A549 (cell line): ENCODE measurements at regions of chr15 and their contacts with region 1.

Region 1: DNA sequence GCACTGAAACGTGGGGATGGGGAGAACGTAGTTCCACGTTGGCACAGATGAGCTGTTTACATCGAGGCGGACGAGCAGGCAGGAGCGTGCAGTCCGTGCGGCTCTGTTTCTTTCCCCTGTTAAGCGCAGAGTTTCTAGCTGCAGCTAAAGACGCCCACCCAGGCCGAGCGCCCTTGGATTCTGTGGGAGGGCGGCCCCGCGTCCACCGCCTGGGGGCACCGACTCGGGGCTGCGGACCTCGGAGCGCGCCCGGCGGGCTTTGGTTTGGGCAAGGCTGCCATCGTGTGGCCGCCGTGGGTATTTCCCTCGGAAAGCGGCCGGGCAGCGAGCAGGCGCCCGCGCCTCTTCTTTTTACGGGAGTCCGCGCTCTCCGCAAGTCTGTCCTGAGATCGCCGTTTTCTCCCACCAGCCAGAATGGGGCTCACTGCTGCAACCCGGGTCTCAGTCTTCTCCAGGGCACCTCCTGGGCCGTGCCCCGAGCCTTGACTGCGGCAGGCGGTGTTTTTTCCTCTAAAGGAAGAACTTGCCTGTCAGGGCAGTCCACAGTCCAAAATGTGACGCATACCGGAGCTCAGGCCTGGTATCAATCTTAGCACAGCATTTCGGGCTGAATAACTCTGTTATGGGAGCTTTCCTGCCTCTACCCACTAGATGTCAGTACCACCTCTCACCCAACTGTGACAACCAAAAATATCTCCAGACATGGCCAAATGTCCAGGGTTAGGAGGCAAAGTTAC is 219.9 kb upstream of the IGF1R start:
- DNase-seq: peak; percentile 76 to 85
- ATAC-seq: peak; percentile 79 to 93
- H3K4me3 ChIP-seq: peak overlapping the region; percentile 39
- H3K27ac ChIP-seq: peak overlapping the region; percentile 31 to 56; a peak in 4 of 6 replicates
- H3K4me1 ChIP-seq: no peaks in the 10 kb centered on the region
- CTCF ChIP-seq: peak; percentile 94
- EP300 ChIP-seq: no peak
- POLR2A ChIP-seq: no peak
- RAD21 ChIP-seq: peak; percentile 69 to 83

Region 2: GRCh38 chr15:98304371-98304770 is 124.0 kb before region 1 on chr15:
- CTCF ChIA-PET with region 1: interaction called, 16 read pairs
- POLR2A ChIA-PET with region 1: no interaction called
- DNase-seq: no peak
- ATAC-seq: no peak
- H3K4me3 ChIP-seq: no peak overlapping the region
- H3K27ac ChIP-seq: no peak overlapping the region
- H3K4me1 ChIP-seq: no peaks in the 10 kb centered on the region
- CTCF ChIP-seq: no peak
- EP300 ChIP-seq: no peak
- POLR2A ChIP-seq: no peak
- RAD21 ChIP-seq: no peak

Region 3: DNA sequence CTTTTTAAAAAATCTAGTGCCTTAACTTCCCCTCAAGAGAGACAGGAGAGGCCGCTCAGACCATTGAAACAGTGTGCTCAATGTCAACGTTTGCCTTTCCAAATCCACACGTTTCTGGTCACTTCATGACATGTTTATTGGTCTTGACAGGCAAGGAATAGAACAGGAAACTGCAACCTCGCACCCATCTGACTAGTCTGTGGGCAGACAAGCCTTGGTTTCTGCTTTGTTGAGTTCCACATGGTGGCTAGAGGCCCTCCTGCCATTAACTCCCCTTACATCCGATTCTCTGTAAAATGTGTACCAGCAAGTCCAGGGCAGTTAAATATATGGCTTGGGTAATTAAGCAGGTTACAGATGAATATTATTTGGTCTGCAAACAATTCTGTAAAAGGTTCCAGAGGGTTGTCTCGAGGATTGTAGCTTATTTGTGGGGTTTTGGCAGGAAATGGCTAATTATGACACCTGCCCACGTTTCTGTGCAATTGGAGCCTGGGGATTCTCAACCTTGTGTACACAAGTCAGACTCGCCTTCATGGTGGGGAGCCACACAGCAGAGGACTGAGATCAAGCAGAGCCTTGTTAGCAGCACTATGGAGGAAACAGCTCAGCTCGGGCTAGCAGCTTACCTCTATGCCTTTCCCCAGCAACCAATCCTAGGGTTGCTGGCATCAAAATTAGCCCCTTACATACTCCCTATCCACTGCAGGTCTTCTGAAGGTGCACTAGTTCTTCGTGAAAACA is 97.6 kb before region 1 on chr15:
- CTCF ChIA-PET with region 1: interaction called, 11 read pairs
- POLR2A ChIA-PET with region 1: no interaction called
- DNase-seq: no peak
- ATAC-seq: no peak
- H3K4me3 ChIP-seq: no peak overlapping the region
- H3K27ac ChIP-seq: no peak overlapping the region
- H3K4me1 ChIP-seq: no peaks in the 10 kb centered on the region
- CTCF ChIP-seq: no peak
- EP300 ChIP-seq: no peak
- POLR2A ChIP-seq: no peak
- RAD21 ChIP-seq: no peak

Region 4: DNA sequence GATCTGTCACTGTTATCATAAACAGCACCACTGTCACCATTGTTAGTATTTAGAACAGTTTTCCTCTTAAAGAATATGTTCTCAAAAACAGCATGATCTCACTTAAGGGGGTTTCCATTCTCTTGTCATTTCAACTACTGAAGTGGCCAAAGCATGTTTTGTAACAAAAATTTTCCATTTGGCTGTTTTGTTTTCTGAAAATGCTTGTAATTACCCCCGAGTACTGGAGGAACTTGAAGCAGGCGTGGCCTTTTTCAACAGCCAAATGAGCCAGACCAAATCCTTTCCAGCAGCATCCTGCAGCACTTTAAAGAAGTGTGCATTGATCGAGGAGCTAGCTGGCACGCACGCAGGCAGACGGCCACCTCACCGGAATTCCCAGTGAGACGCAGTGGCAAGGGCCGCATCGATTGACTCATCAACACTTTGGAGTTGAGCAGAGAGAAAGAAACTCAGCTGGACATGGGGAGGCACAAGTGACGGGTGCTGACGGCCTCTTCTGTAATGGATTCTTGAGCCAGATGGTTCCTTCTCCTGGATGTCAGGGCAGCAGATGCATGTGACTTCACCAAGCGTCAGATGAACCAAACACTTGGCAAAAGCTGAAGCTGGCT is 14.4 kb before region 1 on chr15:
- CTCF ChIA-PET with region 1: interaction called, 82 read pairs
- POLR2A ChIA-PET with region 1: no interaction called
- DNase-seq: no peak
- ATAC-seq: no peak
- H3K4me3 ChIP-seq: no peak overlapping the region
- H3K27ac ChIP-seq: no peak overlapping the region
- H3K4me1 ChIP-seq: peaks cover 6% of the 10 kb centered on the region; the same call in 1 of the 3 replicates
- CTCF ChIP-seq: no peak
- EP300 ChIP-seq: no peak
- POLR2A ChIP-seq: no peak
- RAD21 ChIP-seq: no peak

Region 5: GRCh38 chr15:98455965-98456364 is 27.5 kb after region 1 on chr15:
- CTCF ChIA-PET with region 1: interaction called, 16 read pairs
- POLR2A ChIA-PET with region 1: no interaction called
- DNase-seq: no peak
- ATAC-seq: no peak
- H3K4me3 ChIP-seq: no peak overlapping the region
- H3K27ac ChIP-seq: no peak overlapping the region
- H3K4me1 ChIP-seq: no peaks in the 10 kb centered on the region
- CTCF ChIP-seq: no peak
- EP300 ChIP-seq: no peak
- POLR2A ChIP-seq: no peak
- RAD21 ChIP-seq: no peak

Region 6: GRCh38 chr15:98727115-98728085 is 299.0 kb after region 1 on chr15:
- CTCF ChIA-PET with region 1: no interaction called
- POLR2A ChIA-PET with region 1: no interaction called
- DNase-seq: peak; percentile 93 to 98
- ATAC-seq: peak; percentile 96 to 98
- H3K4me3 ChIP-seq: peak overlapping the region; percentile 17; the same call in 2 of the 3 replicates
- H3K27ac ChIP-seq: peak overlapping the region; percentile 87 to 92
- H3K4me1 ChIP-seq: peaks cover 97% of the 10 kb centered on the region
- CTCF ChIP-seq: no peak
- EP300 ChIP-seq: peak in 1 of 2 experiments; percentile 43; a peak in 1 of 5 replicates
- POLR2A ChIP-seq: peak; percentile 21; the same call in 1 of the 2 replicates
- RAD21 ChIP-seq: 0 out of 5 replicates have a peak, but pooled peaks of 1 of the 2 experiments have one; percentile 11